AG04450 (cell line): ENCODE measurements at regions of chr19 and their contacts with region 1.

Region 1: GRCh38 chr19:11798391-11799330 is at the start of gene ZNF491:
- DNase-seq: peak; percentile 61
- H3K4me3 ChIP-seq: peak within 1 kb of the TSS; percentile 85
- H3K27ac ChIP-seq: peak within 1 kb of the TSS; percentile 52
- H3K27me3 ChIP-seq: no peaks in the 10 kb centered on the region
- CTCF ChIP-seq: no peak
- polyA plus RNA-seq, gene ZNF491: 2.1 and 2.2 TPM in 2 replicates

Region 2: GRCh38 chr19:11699931-11700794 is 98.5 kb before region 1 on chr19:
- CTCF ChIA-PET with region 1: interaction called, 11 read pairs
- POLR2A ChIA-PET with region 1: no interaction called
- DNase-seq: peak; percentile 2
- H3K4me3 ChIP-seq: no peak overlapping the region
- H3K27ac ChIP-seq: no peak overlapping the region
- H3K27me3 ChIP-seq: no peaks in the 10 kb centered on the region
- CTCF ChIP-seq: peak; percentile 76

Region 3: DNA sequence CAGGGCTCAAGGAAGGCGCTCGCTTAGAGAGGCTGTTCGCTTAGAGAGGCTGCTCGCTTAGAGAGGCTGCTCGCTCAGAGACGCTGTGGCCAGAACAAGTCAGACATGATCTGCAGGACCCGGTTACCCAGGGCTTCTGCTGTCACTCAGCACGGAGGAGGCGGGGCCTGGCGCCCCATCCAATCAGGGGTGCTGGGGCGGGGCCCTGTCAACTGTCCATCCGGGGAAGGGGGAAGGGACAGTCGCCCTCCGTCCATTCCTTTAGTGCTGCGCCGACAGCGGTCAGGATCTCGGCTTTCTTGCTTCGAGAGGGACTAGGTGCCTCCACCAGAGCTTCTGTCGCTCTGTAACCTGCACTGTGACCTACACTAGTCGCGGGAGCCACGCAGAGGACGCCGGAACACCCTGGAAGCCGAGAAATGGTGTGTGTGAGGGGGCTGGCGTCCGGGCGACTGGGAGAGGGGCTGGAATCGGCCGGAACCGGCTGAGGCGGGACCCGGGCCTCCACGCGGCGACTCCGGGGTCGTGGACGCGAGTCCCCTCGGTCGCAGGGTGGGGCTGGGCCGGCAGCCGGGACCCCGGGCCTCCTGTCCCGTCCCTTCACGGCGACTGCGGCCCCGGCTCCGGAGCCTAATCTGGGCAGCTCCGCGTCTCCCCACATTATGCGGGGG is 15.5 kb after region 1 on chr19 and contains the start of gene ZNF440:
- CTCF ChIA-PET with region 1: interaction called, 64 read pairs
- POLR2A ChIA-PET with region 1: interaction called, 5 read pairs
- DNase-seq: peak; percentile 78
- H3K4me3 ChIP-seq: peak within 1 kb of the TSS; percentile 97
- H3K27ac ChIP-seq: peak within 1 kb of the TSS; percentile 68
- H3K27me3 ChIP-seq: no peaks in the 10 kb centered on the region
- CTCF ChIP-seq: no peak
- polyA plus RNA-seq, gene ZNF440: 4.9 and 6.3 TPM in 2 replicates

Region 4: GRCh38 chr19:11924886-11925650 is 126.4 kb after region 1 on chr19 and contains the start of gene ZNF700:
- CTCF ChIA-PET with region 1: interaction called, 19 read pairs
- POLR2A ChIA-PET with region 1: no interaction called
- DNase-seq: peak; percentile 69
- H3K4me3 ChIP-seq: peak within 1 kb of the TSS; percentile 92
- H3K27ac ChIP-seq: peak within 1 kb of the TSS; percentile 47
- H3K27me3 ChIP-seq: no peaks in the 10 kb centered on the region
- CTCF ChIP-seq: no peak
- polyA plus RNA-seq, gene ZNF700: 6.6 and 8.4 TPM in 2 replicates

Region 5: DNA sequence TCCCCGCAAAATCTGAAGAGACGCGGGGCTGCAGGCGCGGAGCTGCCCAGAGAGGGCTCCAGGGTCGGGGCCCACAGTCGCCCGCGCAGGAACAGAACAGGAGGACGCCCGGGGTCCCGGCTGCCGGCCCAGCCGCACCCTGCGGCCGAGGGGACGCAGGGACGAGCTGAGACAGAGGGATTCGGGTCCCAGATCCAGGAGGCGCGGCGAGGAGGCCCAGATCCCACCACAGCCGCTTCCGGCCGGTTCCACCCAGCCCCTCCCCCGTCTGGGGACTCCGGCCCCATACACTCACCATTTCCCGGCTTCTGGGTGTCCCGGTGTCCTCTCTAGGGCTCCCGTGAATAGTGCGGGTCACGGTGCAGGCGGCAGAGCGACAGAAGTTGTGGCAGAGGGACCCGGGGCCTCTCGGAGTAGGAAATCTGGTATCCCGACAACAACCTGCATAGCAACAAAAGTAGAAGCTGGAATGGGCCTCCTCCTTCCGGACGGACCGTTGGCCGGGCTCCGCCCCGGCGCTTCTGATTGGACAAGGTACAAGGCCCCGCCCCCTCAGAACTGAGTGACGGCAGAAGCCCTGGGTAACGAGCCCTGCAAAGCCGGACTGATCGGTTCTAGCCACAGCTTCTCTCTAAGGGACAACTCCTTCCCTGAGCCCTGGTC is 341.4 kb after region 1 on chr19 and contains the start of gene ZNF20:
- CTCF ChIA-PET with region 1: interaction called, 10 read pairs
- POLR2A ChIA-PET with region 1: interaction called, 3 read pairs
- DNase-seq: peak; percentile 78
- H3K4me3 ChIP-seq: peak within 1 kb of the TSS; percentile 75
- H3K27ac ChIP-seq: peak within 1 kb of the TSS; percentile 66
- H3K27me3 ChIP-seq: no peaks in the 10 kb centered on the region
- CTCF ChIP-seq: no peak
- polyA plus RNA-seq, gene ZNF20: 2.4 and 2.7 TPM in 2 replicates